A673 (cell line): ENCODE measurements at regions of chr12 and their contacts with region 1.

Region 1: DNA sequence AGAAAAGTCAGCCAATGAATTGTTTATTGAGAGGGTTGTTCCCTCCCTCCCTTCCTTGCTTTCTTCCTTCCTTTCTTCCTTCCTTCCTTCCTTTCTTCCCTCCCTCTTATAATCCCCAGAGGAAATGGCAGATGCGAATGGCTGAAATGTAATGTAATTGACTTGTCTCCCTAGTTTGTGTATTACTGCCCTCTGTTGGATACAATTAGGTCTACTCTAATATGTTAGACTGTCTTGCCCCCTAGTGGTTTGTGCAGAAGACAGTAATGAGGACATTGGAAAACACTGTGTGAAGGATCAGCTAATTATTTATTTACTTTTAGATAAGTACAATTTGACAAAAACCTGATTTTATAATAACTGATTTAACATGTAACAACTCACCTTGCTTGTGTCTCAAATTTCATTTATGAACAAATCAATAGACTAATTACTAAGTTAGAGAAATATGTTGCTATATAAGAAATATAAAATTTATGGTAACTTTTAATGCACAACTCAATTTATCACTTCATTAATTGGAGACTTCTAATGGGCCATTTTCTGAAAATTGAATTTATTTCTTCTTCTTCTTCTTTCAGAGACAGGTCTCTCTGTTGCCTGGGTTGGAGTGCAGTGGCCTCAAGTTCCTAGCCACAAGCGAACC is 229.8 kb upstream of the LRIG3 start:
- DNase-seq: peak; percentile 93
- H3K4me3 ChIP-seq: no peak overlapping the region
- H3K27ac ChIP-seq: no peak overlapping the region
- H3K4me1 ChIP-seq: no peaks in the 10 kb centered on the region
- H3K27me3 ChIP-seq: no peaks in the 10 kb centered on the region
- CTCF ChIP-seq: peak; percentile 98

Region 2: GRCh38 chr12:57983146-57983857 is 1166.8 kb before region 1 on chr12:
- CTCF ChIA-PET with region 1: interaction called, 8 read pairs
- POLR2A ChIA-PET with region 1: no interaction called
- intact Hi-C with region 1: loop called (anchors 5 kb)
- DNase-seq: peak; percentile 60
- H3K4me3 ChIP-seq: no peak overlapping the region
- H3K27ac ChIP-seq: no peak overlapping the region
- H3K4me1 ChIP-seq: no peaks in the 10 kb centered on the region
- H3K27me3 ChIP-seq: no peaks in the 10 kb centered on the region
- CTCF ChIP-seq: peak; percentile 82

Region 3: DNA sequence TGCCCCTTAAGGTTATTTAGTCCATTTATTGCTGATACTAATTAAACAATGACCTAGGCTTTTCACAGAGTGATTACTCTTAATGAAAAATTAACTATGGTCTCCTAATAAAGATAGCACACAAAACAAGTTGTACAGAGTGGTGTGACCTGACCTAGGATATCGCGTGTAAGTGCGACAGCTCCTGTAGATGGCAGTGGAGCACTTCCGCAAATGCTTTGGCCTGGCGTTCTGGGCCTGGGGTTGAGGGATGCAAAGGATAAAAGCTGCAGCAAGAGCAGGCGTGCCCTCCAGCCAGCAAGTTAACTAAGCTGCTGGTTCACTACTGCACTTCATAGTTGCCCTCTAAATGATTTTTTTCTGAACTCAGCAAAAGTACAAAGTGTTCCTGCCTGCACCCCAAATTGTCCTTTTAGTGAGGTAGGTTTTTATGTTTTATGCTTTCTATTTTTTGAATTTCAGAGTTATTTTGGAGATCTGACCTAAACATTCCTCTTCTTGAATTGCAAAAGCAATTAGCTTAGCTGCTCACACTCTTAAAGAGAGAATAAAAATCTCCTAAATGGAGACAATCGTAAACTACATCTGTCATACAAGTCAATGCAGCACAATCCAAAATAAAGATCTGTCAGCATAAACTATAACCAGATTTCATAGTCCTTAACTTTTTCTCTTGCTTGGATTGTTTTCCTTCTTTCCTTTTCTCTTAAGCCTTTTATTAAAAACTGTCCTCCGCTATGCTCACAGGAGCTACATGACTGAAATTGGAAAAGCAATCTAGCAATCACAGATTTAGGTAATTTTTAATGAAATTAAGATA is 609.4 kb before region 1 on chr12:
- CTCF ChIA-PET with region 1: interaction called, 18 read pairs
- POLR2A ChIA-PET with region 1: no interaction called
- intact Hi-C with region 1: loop called (anchors 1 kb)
- DNase-seq: peak; percentile 89
- H3K4me3 ChIP-seq: no peak overlapping the region
- H3K27ac ChIP-seq: no peak overlapping the region
- H3K4me1 ChIP-seq: no peaks in the 10 kb centered on the region
- H3K27me3 ChIP-seq: no peaks in the 10 kb centered on the region
- CTCF ChIP-seq: peak; percentile 87

Region 4: DNA sequence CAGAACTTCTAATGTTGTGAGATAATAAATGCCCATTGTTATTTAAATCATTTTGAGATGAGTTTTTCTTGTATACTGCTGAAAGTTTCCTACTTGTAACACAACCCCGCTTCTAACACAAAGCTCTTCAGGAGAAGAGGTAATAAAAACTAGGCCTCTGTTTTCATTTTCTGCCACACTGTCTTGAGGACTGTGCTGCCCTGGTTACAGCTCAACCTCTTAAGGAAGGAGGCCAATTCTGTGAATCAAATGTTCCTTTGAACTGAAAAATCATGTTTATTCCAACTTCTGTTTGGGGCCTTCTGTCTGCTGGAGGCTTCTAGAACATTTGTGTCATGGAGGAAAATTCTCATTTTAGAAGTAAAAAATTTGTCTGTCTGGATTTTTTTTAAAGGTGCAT is 330.1 kb before region 1 on chr12:
- CTCF ChIA-PET with region 1: no interaction called
- POLR2A ChIA-PET with region 1: no interaction called
- intact Hi-C with region 1: loop called (anchors 10 kb)
- DNase-seq: no peak
- H3K4me3 ChIP-seq: no peak overlapping the region
- H3K27ac ChIP-seq: no peak overlapping the region
- H3K4me1 ChIP-seq: no peaks in the 10 kb centered on the region
- H3K27me3 ChIP-seq: no peaks in the 10 kb centered on the region
- CTCF ChIP-seq: no peak

Region 5: DNA sequence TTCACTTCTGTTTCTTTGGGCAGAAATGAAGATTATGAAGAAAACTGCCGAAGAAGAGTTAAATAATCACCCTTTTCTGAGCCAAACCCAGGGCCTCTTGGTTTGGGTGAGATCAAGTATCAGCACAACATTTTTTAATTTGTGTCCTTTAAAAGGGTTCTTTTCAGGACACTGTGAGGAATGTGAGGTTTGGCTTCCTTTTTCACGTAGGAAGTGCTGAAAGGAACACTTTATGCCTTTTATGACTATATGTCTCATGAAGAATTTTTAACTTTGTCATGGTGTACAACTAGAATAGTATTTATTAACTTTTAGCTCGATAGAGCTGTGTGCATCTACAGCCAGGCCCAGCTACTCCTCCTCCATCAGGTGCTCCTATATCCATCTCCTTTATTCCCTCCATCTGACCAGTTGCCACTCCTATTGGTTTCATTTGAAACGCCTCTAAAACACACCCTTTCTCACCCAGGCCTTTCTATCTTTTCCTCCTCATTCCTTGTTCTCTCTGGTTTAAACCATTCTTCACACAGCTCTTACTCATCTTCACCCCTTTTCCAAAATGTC is 126.2 kb before region 1 on chr12:
- CTCF ChIA-PET with region 1: no interaction called
- POLR2A ChIA-PET with region 1: no interaction called
- intact Hi-C with region 1: no loop called
- DNase-seq: no peak
- H3K4me3 ChIP-seq: no peak overlapping the region
- H3K27ac ChIP-seq: no peak overlapping the region
- H3K4me1 ChIP-seq: no peaks in the 10 kb centered on the region
- H3K27me3 ChIP-seq: no peaks in the 10 kb centered on the region
- CTCF ChIP-seq: no peak

Region 6: DNA sequence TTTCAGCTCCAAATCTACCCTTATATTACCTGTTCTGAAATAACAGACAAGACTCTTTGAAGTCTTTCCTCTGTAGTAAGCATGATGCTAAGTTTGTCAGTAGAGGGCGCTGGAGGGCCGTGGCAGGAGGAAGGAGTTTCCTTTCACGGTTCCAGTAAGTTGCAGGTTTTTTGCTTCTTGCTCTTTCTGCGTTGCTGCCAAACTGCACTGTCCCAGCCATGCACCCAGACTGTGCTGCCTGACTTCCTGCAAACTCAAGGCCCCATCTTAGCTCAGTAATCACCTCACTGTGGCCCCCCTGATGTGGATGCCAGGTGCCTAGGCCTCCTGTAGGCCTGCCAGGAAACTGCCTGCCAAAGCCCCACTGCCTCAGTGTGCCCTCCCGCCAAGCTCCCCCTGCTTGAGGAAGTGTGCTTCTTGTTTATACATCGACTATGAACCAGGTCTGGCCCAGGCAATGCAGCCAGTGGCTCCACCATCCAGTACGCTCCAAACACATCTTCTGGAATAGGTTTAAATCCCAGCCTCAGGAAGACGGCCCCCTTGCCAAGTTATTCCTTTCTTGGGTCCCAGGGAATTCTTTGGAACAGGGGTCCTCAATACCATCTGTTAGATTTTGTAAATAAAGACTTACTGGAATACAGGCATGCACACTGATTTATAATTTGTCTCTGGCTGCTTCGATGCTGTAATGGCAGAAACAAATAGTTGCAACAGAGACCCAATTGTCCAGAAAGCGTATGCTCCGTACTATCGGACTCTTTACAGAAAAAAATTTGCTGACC is 36.1 kb before region 1 on chr12:
- CTCF ChIA-PET with region 1: interaction called, 5 read pairs
- POLR2A ChIA-PET with region 1: no interaction called
- intact Hi-C with region 1: loop called (anchors 1 kb)
- DNase-seq: peak; percentile 84
- H3K4me3 ChIP-seq: no peak overlapping the region
- H3K27ac ChIP-seq: no peak overlapping the region
- H3K4me1 ChIP-seq: no peaks in the 10 kb centered on the region
- H3K27me3 ChIP-seq: no peaks in the 10 kb centered on the region
- CTCF ChIP-seq: peak; percentile 87

Region 7: DNA sequence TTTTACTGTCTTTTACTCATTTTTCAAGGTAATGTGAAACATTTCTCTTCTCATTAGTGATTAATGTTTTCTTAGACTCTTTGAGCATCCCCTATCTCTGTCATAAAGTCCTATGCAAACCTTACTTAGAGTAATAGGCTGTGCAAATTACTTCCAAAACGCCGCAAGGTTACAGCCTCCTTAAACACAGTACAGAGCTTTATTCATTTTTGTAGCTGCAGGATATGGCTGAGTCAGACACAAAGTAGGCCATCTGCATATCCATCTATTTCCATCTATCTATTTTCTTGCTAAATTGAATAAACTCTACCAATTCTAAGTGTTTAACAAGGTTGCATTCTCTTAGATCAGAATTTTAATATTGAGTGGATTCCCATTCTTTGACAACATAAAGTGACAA is 110.1 kb after region 1 on chr12:
- CTCF ChIA-PET with region 1: no interaction called
- POLR2A ChIA-PET with region 1: no interaction called
- intact Hi-C with region 1: no loop called
- DNase-seq: no peak
- H3K4me3 ChIP-seq: no peak overlapping the region
- H3K27ac ChIP-seq: no peak overlapping the region
- H3K4me1 ChIP-seq: no peaks in the 10 kb centered on the region
- H3K27me3 ChIP-seq: no peaks in the 10 kb centered on the region
- CTCF ChIP-seq: no peak

Region 8: DNA sequence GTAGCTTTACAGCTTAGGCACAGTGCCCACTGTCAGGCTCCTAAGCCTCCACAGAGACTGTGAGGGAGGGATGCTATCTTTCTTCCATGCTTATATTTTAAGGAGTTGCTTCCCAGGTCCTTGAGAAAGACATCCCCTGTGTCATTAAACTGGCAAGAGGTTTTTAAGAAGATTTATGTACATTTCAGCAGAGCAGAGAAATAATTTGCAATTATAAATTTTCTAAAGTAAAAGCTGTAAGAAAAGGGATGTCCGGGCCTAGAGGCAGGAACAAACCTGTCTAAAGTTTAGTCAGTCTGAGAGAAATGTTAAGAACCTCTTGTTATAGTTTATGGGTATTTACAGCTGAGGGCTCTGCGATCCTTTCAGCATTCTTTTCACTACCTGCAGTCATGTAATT is 1161.8 kb after region 1 on chr12:
- CTCF ChIA-PET with region 1: no interaction called
- POLR2A ChIA-PET with region 1: no interaction called
- intact Hi-C with region 1: no loop called
- DNase-seq: no peak
- H3K4me3 ChIP-seq: no peak overlapping the region
- H3K27ac ChIP-seq: no peak overlapping the region
- H3K4me1 ChIP-seq: no peaks in the 10 kb centered on the region
- H3K27me3 ChIP-seq: no peaks in the 10 kb centered on the region
- CTCF ChIP-seq: no peak